Mammary epithelial cell (primary cell): ENCODE measurements at regions of chr17 and their contacts with region 1.

Region 1: GRCh38 chr17:81272616-81273015 is 22.5 kb downstream of the SLC38A10 start:
- DNase-seq: no peak
- H3K4me3 ChIP-seq: no peak overlapping the region
- H3K27ac ChIP-seq: no peak overlapping the region
- H3K4me1 ChIP-seq: no peaks in the 10 kb centered on the region
- H3K27me3 ChIP-seq: no peaks in the 10 kb centered on the region
- CTCF ChIP-seq: no peak

Region 2: DNA sequence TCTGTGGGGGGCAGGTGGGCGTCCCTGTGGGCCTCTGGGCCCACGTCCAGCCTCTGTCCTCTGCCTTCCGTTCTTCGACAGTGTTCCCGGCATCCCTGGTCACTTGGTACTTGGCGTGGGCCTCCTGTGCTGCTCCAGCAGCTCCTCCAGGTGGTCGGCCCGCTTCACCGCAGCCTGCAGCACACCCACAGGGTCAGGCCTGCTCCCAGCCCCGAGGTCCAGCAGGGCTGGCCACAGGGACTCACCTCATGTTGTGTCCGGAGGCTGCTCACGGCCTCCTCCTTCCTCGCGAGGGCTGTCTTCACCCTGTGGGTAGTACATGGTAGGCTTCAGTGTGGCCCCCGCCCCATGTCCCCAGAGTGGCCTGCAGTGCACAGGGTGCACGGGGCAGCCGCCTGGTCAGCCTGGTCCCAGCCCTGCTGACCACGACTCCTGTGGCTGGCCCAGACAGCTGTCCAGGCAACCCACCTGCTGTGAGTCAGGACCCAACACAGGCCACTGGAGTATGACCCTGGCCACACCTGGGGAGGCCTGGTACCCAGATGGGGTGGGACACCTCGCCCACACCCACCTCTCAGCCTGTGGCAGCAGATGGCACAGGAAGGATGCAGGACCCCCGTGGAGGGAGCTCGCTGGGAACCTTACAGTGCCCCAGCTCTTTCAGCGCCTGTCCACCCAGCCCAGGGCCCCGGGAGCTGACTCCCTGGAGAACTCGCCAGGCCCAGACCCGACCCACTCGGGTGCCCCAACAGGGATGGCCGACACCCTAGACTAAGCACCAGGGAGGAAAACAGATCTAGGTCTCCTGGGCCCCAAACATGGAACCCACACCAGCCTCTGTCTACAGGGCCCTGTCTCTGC is 82.7 kb before region 1 on chr17:
- CTCF ChIA-PET with region 1: no interaction called
- dilution Hi-C with region 1: loop called (anchors 5 kb)
- in situ Hi-C with region 1: no loop called
- intact Hi-C with region 1: no loop called
- DNase-seq: no peak
- H3K4me3 ChIP-seq: no peak overlapping the region
- H3K27ac ChIP-seq: no peak overlapping the region
- H3K4me1 ChIP-seq: no peaks in the 10 kb centered on the region
- H3K27me3 ChIP-seq: no peaks in the 10 kb centered on the region
- CTCF ChIP-seq: no peak

Region 3: DNA sequence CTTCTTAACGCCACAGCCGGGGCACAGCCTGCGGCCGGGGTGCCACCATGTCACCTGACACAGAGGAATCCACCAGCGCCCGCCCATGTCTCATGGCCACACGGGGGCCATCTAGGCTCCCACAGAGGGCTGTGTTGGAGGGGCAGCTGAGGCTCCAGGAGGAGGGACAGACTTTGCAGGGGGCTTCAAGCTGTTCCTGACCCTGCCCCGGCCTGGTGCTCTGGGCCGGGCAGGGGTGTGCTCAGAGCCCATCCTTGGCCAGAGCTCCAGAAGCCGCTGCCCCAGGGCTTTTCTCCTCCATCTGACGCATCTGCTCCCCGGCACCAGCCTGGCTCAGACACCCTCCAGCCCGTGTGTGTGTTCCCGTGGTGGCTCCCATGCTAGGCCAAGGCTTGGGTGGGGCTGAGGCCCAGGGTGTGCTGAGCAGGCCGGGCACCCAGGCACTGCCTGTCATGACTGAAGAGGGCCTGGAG is 30.3 kb after region 1 on chr17:
- CTCF ChIA-PET with region 1: no interaction called
- dilution Hi-C with region 1: no loop called
- in situ Hi-C with region 1: no loop called
- intact Hi-C with region 1: no loop called
- DNase-seq: no peak
- H3K4me3 ChIP-seq: no peak overlapping the region
- H3K27ac ChIP-seq: no peak overlapping the region
- H3K4me1 ChIP-seq: peaks cover 19% of the 10 kb centered on the region
- H3K27me3 ChIP-seq: no peaks in the 10 kb centered on the region
- CTCF ChIP-seq: no peak